Calu3 (cell line): ENCODE measurements at regions of chr6 and their contacts with region 1.

Region 1: DNA sequence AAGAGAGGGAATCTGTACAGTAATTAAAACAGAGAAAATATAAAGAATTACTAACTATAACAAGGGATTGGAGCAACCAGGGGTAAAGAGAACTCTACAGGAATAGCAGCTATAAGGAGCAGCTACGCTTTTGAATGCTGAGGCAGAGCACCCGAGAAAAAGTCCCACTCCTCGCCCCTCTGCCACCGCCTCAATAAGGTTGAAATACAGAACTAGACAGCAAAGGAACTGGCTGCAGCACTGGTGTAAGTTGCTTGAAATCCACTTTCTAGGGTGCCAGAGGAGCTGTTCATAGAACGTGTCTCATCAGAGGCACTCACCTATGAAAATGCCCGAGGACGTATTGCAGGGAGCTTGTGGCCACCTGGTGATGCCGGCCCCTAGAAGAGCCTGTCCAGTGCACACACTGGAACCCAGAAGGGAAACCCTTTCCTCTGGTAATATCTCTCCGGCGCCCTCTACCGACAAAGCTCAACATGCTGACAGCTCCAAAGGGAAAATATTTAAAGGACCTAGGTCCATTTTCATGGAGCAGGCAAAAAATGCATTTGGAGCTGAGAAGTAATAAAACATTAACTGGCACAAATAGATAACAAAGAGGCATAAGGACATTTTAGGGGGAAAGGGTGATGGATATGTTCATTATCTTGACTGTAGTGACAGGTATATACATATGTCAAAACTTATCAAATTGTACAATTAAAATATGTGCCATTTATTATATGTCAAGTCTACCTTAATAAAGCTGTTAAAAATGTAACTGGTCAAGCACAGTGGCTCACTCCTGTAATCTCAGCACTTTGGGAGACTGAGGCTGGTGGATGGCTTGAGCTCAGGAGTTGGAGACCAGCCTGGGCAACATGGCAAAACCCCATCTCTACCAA is 137.4 kb upstream of the HDAC2 start:
- DNase-seq: peak; percentile 84
- H3K4me3 Mint-ChIP-seq: no peak overlapping the region
- H3K27ac Mint-ChIP-seq: no peak overlapping the region
- H3K4me1 Mint-ChIP-seq: no peaks in the 10 kb centered on the region
- H3K27me3 Mint-ChIP-seq: no peaks in the 10 kb centered on the region
- CTCF ChIP-seq: peak; percentile 55

Region 2: DNA sequence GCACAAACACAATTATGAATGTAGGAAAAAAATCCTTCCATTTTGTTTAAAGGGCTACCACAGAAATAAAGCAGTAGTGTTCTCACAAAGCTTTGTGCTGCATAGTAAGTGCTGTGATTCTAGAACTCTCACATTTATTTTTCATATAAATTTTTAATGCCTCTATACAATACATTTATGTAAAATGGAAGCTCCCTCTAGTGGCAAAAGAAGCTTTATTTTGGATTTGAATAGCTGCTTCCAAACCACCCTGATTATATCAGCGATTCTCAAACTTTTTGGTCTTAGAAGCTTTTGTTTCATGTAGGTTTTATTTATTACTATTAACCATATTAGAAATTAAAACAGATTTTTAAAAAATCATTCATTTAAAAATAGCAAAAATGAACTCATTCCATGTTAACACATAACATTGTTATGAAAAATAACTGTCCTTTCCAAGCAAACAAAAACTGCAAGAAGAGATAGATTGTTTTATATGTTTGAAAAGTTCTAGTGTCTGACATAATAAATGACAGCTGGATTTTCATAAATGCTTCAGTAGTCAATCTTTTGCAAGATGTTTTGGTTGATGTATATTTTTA is 196.0 kb after region 1 on chr6:
- CTCF ChIA-PET with region 1: interaction called, 6 read pairs
- intact Hi-C with region 1: loop called (anchors 5 kb)
- DNase-seq: no peak
- H3K4me3 Mint-ChIP-seq: no peak overlapping the region
- H3K27ac Mint-ChIP-seq: no peak overlapping the region
- H3K4me1 Mint-ChIP-seq: no peaks in the 10 kb centered on the region
- H3K27me3 Mint-ChIP-seq: no peaks in the 10 kb centered on the region
- CTCF ChIP-seq: peak; percentile 19

Region 3: GRCh38 chr6:114514153-114514552 is 405.8 kb after region 1 on chr6:
- CTCF ChIA-PET with region 1: no interaction called
- intact Hi-C with region 1: loop called (anchors 10 kb)
- DNase-seq: no peak
- H3K4me3 Mint-ChIP-seq: no peak overlapping the region
- H3K27ac Mint-ChIP-seq: no peak overlapping the region
- H3K4me1 Mint-ChIP-seq: no peaks in the 10 kb centered on the region
- H3K27me3 Mint-ChIP-seq: no peaks in the 10 kb centered on the region
- CTCF ChIP-seq: no peak

Region 4: GRCh38 chr6:114638346-114638745 is 530.0 kb after region 1 on chr6:
- CTCF ChIA-PET with region 1: no interaction called
- intact Hi-C with region 1: no loop called
- DNase-seq: no peak
- H3K4me3 Mint-ChIP-seq: no peak overlapping the region
- H3K27ac Mint-ChIP-seq: no peak overlapping the region
- H3K4me1 Mint-ChIP-seq: no peaks in the 10 kb centered on the region
- H3K27me3 Mint-ChIP-seq: no peaks in the 10 kb centered on the region
- CTCF ChIP-seq: no peak